ENCODE measurements at regions of chr5 and their contacts with region 1.

Region 1: GRCh38 chr5:88875341-88876234 is 7.4 kb downstream of the MEF2C start:
- DNase-seq: no peak
- H3K4me3 ChIP-seq: peak overlapping the region; percentile 79
- H3K27ac ChIP-seq: peak overlapping the region; percentile 94
- H3K4me1 ChIP-seq: peaks cover 82% of the 10 kb centered on the region
- H3K27me3 ChIP-seq: no peaks in the 10 kb centered on the region
- CTCF ChIP-seq: no peak

Region 2: GRCh38 chr5:88743231-88743879 is 132.2 kb before region 1 on chr5:
- intact Hi-C with region 1: loop called (anchors 5 kb)
- DNase-seq: no peak
- H3K4me3 ChIP-seq: no peak overlapping the region
- H3K27ac ChIP-seq: peak overlapping the region; percentile 28
- H3K4me1 ChIP-seq: peaks cover 36% of the 10 kb centered on the region
- H3K27me3 ChIP-seq: no peaks in the 10 kb centered on the region
- CTCF ChIP-seq: no peak